ENCODE measurements at regions of chr7 and their contacts with region 1.

Region 1: DNA sequence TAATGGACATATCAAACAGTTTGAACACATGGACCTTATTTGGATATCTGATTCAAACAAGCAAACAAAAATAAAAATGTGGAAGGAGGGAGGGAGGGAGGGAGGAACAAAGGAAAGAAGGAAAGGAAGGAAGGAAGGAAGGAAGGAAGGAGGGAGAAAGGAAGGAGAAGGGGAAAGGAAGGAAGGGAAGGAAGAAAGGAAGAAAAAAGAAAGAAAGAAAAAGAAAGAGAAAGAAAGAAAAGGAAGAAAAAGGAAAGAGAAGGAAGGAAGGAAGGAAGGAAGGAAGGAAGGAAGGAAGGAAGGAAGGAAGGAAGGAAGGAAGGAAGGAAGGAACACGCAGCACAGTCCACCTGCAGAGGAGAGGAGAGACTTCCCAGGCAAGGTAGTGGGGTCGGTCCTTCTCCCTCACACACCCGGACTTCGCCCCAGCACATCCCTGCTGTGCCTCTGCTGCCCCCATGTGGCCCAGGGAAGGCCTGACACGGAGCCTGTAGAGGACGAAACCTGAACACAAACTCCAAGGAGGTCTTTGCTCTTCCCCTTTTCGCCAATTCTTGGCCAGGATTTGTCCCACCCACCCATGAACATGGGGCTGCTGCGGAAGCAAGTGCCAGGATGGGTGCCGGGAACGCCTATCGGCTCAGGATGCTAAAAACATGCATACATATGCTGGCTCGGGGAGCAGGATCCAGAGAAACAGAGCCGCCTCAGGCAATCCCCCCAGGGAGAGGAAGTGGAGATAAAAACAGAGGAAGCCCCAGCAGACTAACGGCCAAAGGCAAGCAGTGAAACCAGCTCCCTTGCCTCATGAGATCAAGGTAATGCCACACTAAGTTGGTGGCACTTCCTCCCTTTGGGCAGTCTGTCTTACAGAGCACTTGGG is 52.3 kb upstream of the DGKI start:
- DNase-seq: peak; percentile 93
- H3K4me3 Mint-ChIP-seq: peak overlapping the region; percentile 62
- H3K27ac Mint-ChIP-seq: peak overlapping the region; percentile 76
- H3K4me1 Mint-ChIP-seq: peaks cover 28% of the 10 kb centered on the region
- H3K27me3 Mint-ChIP-seq: no peaks in the 10 kb centered on the region

Region 2: DNA sequence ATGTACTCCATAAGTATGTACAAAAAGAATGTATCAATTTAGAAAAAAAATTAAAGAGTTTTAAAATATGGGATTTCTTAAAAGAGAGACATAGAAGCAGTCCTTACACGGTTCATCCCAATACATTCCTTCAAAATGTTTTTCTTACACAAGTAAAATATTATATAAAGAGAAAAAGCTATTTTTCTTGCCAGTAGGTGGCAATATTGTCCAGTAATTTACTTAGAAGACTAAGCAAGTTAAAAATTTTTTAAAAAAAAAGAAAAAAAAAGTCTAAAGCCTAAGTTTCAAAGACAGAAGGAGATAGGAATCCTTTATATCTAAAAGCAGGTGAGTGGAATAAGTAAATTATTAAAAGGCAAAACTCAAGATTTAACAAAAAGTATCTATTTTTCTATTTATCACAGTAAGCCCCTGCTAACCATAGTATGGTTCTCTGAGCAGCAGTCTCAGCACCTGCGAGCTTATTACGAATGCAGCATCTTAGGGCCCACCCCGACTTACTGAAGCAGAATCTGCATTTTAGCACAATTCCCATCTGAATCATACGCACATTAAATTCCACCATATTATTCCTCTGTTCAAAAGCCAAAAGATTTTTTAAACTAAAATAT is 292.9 kb before region 1 on chr7:
- intact Hi-C with region 1: loop called (anchors 2 kb)
- DNase-seq: no peak
- H3K4me3 Mint-ChIP-seq: no peak overlapping the region
- H3K27ac Mint-ChIP-seq: no peak overlapping the region
- H3K4me1 Mint-ChIP-seq: no peaks in the 10 kb centered on the region
- H3K27me3 Mint-ChIP-seq: no peaks in the 10 kb centered on the region

Region 3: DNA sequence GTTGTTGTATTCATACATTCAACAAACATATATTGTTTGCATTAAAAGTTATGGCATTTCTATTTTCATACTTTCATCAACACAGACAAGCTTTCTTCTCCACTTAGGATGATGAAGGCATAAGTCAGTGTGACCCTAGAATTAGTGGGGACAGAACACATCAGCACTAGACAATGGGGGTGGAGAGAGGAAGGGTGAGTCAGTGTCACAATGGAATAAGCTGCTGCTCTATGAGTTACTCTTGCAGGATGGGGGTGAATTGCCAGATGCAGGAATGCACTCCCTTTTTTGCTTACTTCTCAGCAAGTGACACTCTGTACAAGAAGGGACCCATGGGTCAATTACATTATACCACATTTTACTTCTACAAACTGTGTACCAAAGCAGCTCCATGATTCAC is 126.3 kb before region 1 on chr7:
- intact Hi-C with region 1: loop called (anchors 2 kb)
- DNase-seq: no peak
- H3K4me3 Mint-ChIP-seq: peak overlapping the region; percentile 75
- H3K27ac Mint-ChIP-seq: peak overlapping the region; percentile 34
- H3K4me1 Mint-ChIP-seq: peaks cover 3% of the 10 kb centered on the region
- H3K27me3 Mint-ChIP-seq: no peaks in the 10 kb centered on the region

Region 4: GRCh38 chr7:137846827-137847567 is 52.1 kb before region 1 on chr7 and contains the start of gene DGKI:
- intact Hi-C with region 1: loop called (anchors 10 kb)
- DNase-seq: no peak
- H3K4me3 Mint-ChIP-seq: peak within 1 kb of the TSS; percentile 70
- H3K27ac Mint-ChIP-seq: no peak within 1 kb of the TSS
- H3K4me1 Mint-ChIP-seq: peaks cover 6% of the 10 kb centered on the region
- H3K27me3 Mint-ChIP-seq: peaks cover 53% of the 10 kb centered on the region
- total RNA-seq, gene DGKI: 16.2 and 21.4 TPM in 2 replicates

Region 5: GRCh38 chr7:137882261-137882668 is 16.8 kb before region 1 on chr7:
- intact Hi-C with region 1: no loop called
- DNase-seq: no peak
- H3K4me3 Mint-ChIP-seq: no peak overlapping the region
- H3K27ac Mint-ChIP-seq: peak overlapping the region; percentile 55
- H3K4me1 Mint-ChIP-seq: peaks cover 22% of the 10 kb centered on the region
- H3K27me3 Mint-ChIP-seq: no peaks in the 10 kb centered on the region

Region 6: GRCh38 chr7:137923380-137923779 is 24.3 kb after region 1 on chr7:
- intact Hi-C with region 1: loop called (anchors 2 kb)
- DNase-seq: no peak
- H3K4me3 Mint-ChIP-seq: no peak overlapping the region
- H3K27ac Mint-ChIP-seq: peak overlapping the region; percentile 34
- H3K4me1 Mint-ChIP-seq: peaks cover 32% of the 10 kb centered on the region
- H3K27me3 Mint-ChIP-seq: no peaks in the 10 kb centered on the region

Region 7: DNA sequence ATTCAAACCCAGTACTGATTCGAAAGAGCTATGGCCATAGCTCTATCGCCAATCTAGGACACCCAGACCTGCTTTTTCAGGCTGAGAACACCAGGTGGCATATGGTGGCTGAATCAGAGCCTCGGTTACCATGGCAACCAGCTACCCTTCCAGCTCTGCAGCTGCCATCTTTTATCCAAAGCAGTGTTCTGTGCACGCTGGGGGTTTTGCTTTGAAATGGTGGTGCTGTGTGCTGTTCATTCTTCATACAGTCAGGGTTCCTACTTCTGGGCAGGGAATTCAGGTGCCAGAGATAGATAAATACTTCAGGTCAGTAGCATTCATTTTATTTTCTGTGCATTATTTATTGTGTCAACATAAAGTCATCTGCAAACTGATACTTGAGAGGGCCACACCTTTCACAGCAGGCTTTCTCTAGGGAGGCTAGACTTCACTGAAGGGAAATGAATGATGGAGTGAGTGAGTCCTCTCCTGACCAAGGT is 262.6 kb after region 1 on chr7:
- intact Hi-C with region 1: loop called (anchors 10 kb)
- DNase-seq: peak; percentile 92
- H3K4me3 Mint-ChIP-seq: no peak overlapping the region
- H3K27ac Mint-ChIP-seq: no peak overlapping the region
- H3K4me1 Mint-ChIP-seq: no peaks in the 10 kb centered on the region
- H3K27me3 Mint-ChIP-seq: peaks cover 2% of the 10 kb centered on the region

Region 8: GRCh38 chr7:138865843-138866242 is 966.8 kb after region 1 on chr7:
- intact Hi-C with region 1: loop called (anchors 10 kb)
- DNase-seq: peak; percentile 88
- H3K4me3 Mint-ChIP-seq: no peak overlapping the region
- H3K27ac Mint-ChIP-seq: no peak overlapping the region
- H3K4me1 Mint-ChIP-seq: peaks cover 14% of the 10 kb centered on the region
- H3K27me3 Mint-ChIP-seq: peaks cover 2% of the 10 kb centered on the region